MCF 10A (cell line): ENCODE measurements at regions of chr1 and their contacts with region 1.

Region 1: GRCh38 chr1:182054698-182055326 is 6.7 kb downstream of the ZNF648 start:
- DNase-seq: peak; percentile 87
- H3K4me3 Mint-ChIP-seq: no peak overlapping the region
- H3K27ac Mint-ChIP-seq: no peak overlapping the region
- H3K4me1 Mint-ChIP-seq: peaks cover 6% of the 10 kb centered on the region
- H3K27me3 Mint-ChIP-seq: no peaks in the 10 kb centered on the region
- CTCF ChIP-seq: peak; percentile 73

Region 2: GRCh38 chr1:181676269-181676668 is 378.5 kb before region 1 on chr1:
- CTCF ChIA-PET with region 1: no interaction called
- POLR2A ChIA-PET with region 1: no interaction called
- intact Hi-C with region 1: loop called (anchors 2 kb)
- DNase-seq: peak; percentile 77
- H3K4me3 Mint-ChIP-seq: no peak overlapping the region
- H3K27ac Mint-ChIP-seq: no peak overlapping the region
- H3K4me1 Mint-ChIP-seq: no peaks in the 10 kb centered on the region
- H3K27me3 Mint-ChIP-seq: peaks cover 12% of the 10 kb centered on the region
- CTCF ChIP-seq: peak; percentile 75

Region 3: GRCh38 chr1:182029379-182030331 is 25.2 kb before region 1 on chr1:
- CTCF ChIA-PET with region 1: interaction called, 7 read pairs
- POLR2A ChIA-PET with region 1: interaction called, 10 read pairs
- intact Hi-C with region 1: no loop called
- DNase-seq: peak; percentile 99
- H3K4me3 Mint-ChIP-seq: peak overlapping the region; percentile 85
- H3K27ac Mint-ChIP-seq: peak overlapping the region; percentile 91
- H3K4me1 Mint-ChIP-seq: peaks cover 10% of the 10 kb centered on the region
- H3K27me3 Mint-ChIP-seq: no peaks in the 10 kb centered on the region
- CTCF ChIP-seq: peak; percentile 42

Region 4: GRCh38 chr1:182069028-182069466 is 14.2 kb after region 1 on chr1:
- CTCF ChIA-PET with region 1: interaction called, 50 read pairs
- POLR2A ChIA-PET with region 1: no interaction called
- intact Hi-C with region 1: no loop called
- DNase-seq: peak; percentile 81
- H3K4me3 Mint-ChIP-seq: no peak overlapping the region
- H3K27ac Mint-ChIP-seq: no peak overlapping the region
- H3K4me1 Mint-ChIP-seq: no peaks in the 10 kb centered on the region
- H3K27me3 Mint-ChIP-seq: no peaks in the 10 kb centered on the region
- CTCF ChIP-seq: peak; percentile 94